GM18951 (cell line): ENCODE measurements at regions of chr2 and their contacts with region 1.

Region 1: GRCh38 chr2:106542811-106543259 is 55.7 kb downstream of the CD8B2 start:
- POLR2A ChIP-seq: no peak

Region 2: DNA sequence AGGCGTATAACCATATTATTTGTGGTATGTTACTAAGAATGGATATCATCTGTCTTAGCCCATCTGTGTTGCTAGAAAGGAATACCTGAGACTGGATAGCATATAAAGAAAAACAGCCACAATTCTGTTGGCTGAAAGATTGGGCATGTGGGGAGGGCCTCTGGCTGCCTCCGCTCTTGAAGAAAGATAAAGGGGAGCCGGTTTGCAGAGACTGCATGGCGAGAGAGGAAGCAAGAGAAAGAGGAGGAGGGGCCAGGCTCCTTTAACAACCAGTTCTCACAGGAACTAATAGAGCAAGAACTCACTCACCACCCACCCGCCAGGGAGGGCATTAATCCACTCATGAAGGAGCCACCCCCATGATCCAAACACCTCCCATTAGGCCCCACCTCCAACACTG is 319.5 kb before region 1 on chr2:
- in situ Hi-C with region 1: no loop called
- POLR2A ChIP-seq: no peak

Region 3: DNA sequence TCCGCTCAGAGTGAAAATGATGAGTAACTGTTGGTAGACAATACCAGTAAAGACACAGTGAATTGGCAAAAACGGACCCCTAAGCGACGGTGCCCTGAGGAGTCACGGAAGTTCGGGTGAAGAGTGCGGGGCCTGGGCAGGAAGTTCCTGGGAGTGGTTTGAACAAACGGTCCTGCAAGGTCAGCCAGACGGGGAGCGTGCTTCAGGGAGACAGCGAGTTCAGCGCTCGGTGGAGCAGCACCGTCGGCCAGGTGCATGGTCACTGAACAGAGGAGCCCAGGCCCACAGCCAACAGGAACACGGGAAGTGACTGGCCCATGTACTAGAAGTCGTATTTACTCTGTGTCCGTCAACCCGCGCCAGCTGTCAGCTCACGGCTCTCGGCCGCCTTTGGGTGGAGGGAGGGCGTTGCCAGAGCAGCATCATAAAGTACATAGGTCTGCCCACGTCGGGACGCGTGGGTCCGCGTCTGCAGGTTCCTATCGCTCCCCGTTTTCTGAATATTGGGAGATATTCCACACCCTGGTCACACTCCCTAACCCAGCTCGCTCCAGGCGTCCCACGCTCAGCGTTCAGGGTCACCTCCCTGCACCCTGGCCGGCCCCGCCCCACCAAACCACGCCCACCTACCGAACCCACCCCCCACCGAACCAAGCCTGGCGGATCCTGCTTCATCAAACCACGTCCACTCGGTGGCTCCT is 273.1 kb before region 1 on chr2:
- in situ Hi-C with region 1: loop called (anchors 25 kb)
- POLR2A ChIP-seq: no peak